T-cell (primary cell): ENCODE measurements at regions of chr21 and their contacts with region 1.

Region 1: DNA sequence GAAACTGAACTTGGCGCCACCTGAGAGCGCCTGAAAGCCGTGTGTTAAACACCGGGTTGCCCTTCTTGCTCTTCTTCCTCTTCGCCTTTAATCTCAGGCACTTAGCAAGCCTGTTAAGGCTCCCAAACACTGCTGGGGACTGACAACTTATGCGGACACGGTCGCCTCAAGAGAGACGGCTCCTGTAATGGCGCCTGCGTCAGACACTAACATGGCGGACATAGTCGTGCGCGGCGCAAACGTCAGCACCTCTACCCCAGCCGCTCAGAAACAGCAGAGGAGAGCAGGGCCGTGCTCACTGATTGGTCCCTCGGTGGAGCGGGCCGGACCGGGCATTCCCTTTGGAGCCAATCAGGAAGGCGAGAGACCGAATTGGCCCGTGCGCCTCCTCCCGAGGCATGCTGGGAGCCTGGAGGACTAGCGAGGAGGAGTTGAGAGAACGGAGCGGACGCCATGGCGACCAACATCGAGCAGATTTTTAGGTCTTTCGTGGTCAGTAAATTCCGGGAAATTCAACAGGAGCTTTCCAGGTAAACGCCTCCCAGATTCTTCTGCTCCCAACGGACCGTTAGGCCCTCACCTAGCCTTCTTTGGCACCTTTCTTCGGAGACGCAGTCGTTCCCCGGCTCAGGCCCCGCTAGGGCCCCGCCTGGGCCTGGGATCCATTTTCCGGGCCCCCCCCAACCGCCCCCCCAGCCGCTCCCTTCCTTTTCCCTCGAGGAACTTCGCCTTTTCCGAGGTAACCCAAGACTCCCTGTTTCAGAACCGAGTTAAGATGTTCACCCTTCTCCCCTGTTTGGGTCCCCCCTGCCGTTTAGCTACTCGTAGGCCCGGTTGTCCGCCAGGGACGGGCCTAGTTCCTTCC is at the start of gene SON:
- DNase-seq: peak; percentile 86 to 99 (median 98)
- ATAC-seq: peak; percentile 90 to 92 (median 92)
- H3K4me3 ChIP-seq: peak within 1 kb of the TSS; percentile 94 to 100
- H3K4me3 Mint-ChIP-seq: peak within 1 kb of the TSS; percentile 94 to 99 (median 98)
- H3K27ac ChIP-seq: peak within 1 kb of the TSS; percentile 100
- H3K27ac Mint-ChIP-seq: peak within 1 kb of the TSS; percentile 100
- H3K4me1 ChIP-seq: peaks cover 24 to 41% of the 10 kb centered on the region in 2 experiments
- H3K4me1 Mint-ChIP-seq: peaks cover 49 to 52% (median 49%) of the 10 kb centered on the region in 3 donors
- H3K27me3 ChIP-seq: no peaks in the 10 kb centered on the region
- H3K27me3 Mint-ChIP-seq: no peaks in the 10 kb centered on the region
- total RNA-seq, gene SON: 360 to 418 (median 374) TPM

Region 2: DNA sequence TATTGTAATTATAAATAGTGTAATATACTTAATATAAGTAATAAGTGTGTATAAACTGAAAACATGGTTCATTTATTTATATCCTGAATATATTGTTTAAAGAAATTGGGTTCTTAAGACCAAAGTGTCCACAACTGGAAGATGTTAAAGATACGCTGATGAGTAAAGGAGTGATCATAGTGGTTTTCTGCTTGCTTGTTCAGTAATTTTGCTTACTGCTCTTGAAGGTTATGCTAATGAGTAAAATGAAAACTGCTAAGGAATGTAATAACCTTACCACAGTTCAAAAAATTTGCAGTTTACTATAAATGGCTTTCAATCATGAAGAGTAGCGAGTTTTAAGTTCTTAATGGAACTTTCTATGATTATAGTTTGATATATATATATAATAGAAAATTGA is 23.6 kb after region 1 on chr21:
- CTCF ChIA-PET with region 1: interaction called in 1 of 2 experiments, 3 read pairs
- POLR2A ChIA-PET with region 1: interaction called in 1 of 2 experiments, 11 read pairs
- DNase-seq: no peak
- ATAC-seq: no peak
- H3K4me3 ChIP-seq: no peak overlapping the region
- H3K4me3 Mint-ChIP-seq: no peak overlapping the region
- H3K27ac ChIP-seq: no peak overlapping the region
- H3K27ac Mint-ChIP-seq: peak overlapping the region in 1 of 2 donors; percentile 16
- H3K4me1 ChIP-seq: peaks cover under 1 to 10% of the 10 kb centered on the region in 2 experiments
- H3K4me1 Mint-ChIP-seq: peaks cover 28 to 44% (median 43%) of the 10 kb centered on the region in 3 donors
- H3K27me3 ChIP-seq: no peaks in the 10 kb centered on the region
- H3K27me3 Mint-ChIP-seq: no peaks in the 10 kb centered on the region

Region 3: GRCh38 chr21:33588485-33589335 is 45.8 kb after region 1 on chr21 and contains the start of gene DONSON:
- CTCF ChIA-PET with region 1: interaction called in 1 of 2 experiments, 3 read pairs
- POLR2A ChIA-PET with region 1: interaction called, 4 to 11 read pairs
- DNase-seq: peak; percentile 59 to 93 (median 79)
- ATAC-seq: peak; percentile 95 to 96 (median 96)
- H3K4me3 ChIP-seq: peak within 1 kb of the TSS; percentile 84 to 100
- H3K4me3 Mint-ChIP-seq: peak within 1 kb of the TSS; percentile 90 to 92 (median 91)
- H3K27ac ChIP-seq: peak within 1 kb of the TSS; percentile 48
- H3K27ac Mint-ChIP-seq: peak within 1 kb of the TSS; percentile 86 to 91
- H3K4me1 ChIP-seq: peaks cover 5 to 16% of the 10 kb centered on the region in 2 experiments
- H3K4me1 Mint-ChIP-seq: peaks cover 16 to 19% (median 17%) of the 10 kb centered on the region in 3 donors
- H3K27me3 ChIP-seq: no peaks in the 10 kb centered on the region
- H3K27me3 Mint-ChIP-seq: no peaks in the 10 kb centered on the region
- total RNA-seq, gene DONSON: 8.9 to 14.6 (median 11.0) TPM

Region 4: DNA sequence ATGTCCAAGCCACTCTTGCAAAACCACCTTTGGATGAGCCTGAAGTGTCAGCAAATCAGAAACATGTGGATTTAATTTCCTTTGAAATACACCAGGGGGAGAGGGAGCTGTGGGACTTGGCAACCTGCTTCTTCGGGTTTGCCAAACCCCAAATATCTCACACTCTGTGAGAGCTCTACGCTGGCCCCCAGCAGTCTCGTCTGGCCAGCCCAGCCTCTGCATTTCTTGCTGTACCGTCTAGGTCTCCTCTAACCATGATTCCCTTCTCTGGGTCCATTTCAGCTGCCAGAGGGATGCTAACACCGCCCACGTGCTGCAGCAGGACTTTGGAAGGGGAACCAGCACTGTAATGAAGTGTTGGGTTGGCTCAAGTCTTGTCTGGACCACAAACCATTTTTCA is 645.1 kb after region 1 on chr21:
- CTCF ChIA-PET with region 1: no interaction called
- POLR2A ChIA-PET with region 1: no interaction called
- DNase-seq: no peak
- ATAC-seq: no peak
- H3K4me3 ChIP-seq: no peak overlapping the region
- H3K4me3 Mint-ChIP-seq: no peak overlapping the region
- H3K27ac ChIP-seq: no peak overlapping the region
- H3K27ac Mint-ChIP-seq: no peak overlapping the region
- H3K4me1 ChIP-seq: peaks cover 5 to 7% of the 10 kb centered on the region in 2 experiments
- H3K4me1 Mint-ChIP-seq: peaks cover 12 to 19% (median 17%) of the 10 kb centered on the region in 3 donors
- H3K27me3 ChIP-seq: no peaks in the 10 kb centered on the region
- H3K27me3 Mint-ChIP-seq: no peaks in the 10 kb centered on the region